MCF 10A (cell line): ENCODE measurements at regions of chr19 and their contacts with region 1.

Region 1: GRCh38 chr19:13262450-13262849 is 112.2 kb downstream of the IER2 start:
- DNase-seq: peak; percentile 64
- H3K4me3 Mint-ChIP-seq: no peak overlapping the region
- H3K27ac Mint-ChIP-seq: no peak overlapping the region
- H3K4me1 Mint-ChIP-seq: peaks cover 11% of the 10 kb centered on the region
- H3K27me3 Mint-ChIP-seq: peaks cover 30% of the 10 kb centered on the region
- CTCF ChIP-seq: peak; percentile 54

Region 2: DNA sequence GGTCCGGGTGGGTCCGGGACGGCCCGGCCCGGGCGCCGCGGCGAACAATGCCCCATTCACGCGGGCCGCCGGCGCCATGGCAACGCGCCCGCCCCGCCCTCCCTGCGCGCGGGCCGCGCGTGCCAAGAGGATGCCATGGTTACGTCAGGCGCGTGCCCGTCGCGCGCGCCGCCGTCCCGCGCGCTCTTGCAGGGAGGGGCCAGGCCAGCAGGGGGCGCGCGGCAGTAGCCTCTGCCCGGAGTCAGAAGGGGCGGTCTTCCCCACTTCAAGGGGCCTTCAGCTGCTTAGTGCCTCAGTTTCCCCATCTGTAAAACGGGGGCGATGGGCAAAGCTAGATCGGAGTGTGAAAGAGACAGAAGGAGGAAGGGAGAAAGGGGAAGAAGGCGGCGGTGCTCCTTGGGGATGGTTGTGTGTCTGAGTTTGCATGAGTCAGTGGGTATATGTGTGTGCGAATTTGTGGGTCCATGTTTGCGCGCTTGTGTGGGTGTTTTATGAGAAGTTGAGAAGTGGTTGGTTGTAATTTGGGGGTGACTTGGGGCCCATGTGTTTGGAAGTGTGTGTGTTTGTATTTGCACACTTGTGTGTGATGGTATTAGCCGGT is 278.8 kb before region 1 on chr19:
- CTCF ChIA-PET with region 1: interaction called, 28 read pairs
- POLR2A ChIA-PET with region 1: no interaction called
- intact Hi-C with region 1: no loop called
- DNase-seq: peak; percentile 74
- H3K4me3 Mint-ChIP-seq: no peak overlapping the region
- H3K27ac Mint-ChIP-seq: no peak overlapping the region
- H3K4me1 Mint-ChIP-seq: peaks cover 6% of the 10 kb centered on the region
- H3K27me3 Mint-ChIP-seq: no peaks in the 10 kb centered on the region
- CTCF ChIP-seq: peak; percentile 94

Region 3: GRCh38 chr19:13195678-13196077 is 66.8 kb before region 1 on chr19:
- CTCF ChIA-PET with region 1: interaction called, 21 read pairs
- POLR2A ChIA-PET with region 1: interaction called, 3 read pairs
- intact Hi-C with region 1: loop called (anchors 1 kb)
- DNase-seq: peak; percentile 43
- H3K4me3 Mint-ChIP-seq: no peak overlapping the region
- H3K27ac Mint-ChIP-seq: no peak overlapping the region
- H3K4me1 Mint-ChIP-seq: no peaks in the 10 kb centered on the region
- H3K27me3 Mint-ChIP-seq: no peaks in the 10 kb centered on the region
- CTCF ChIP-seq: no peak